CD8-positive, alpha-beta T cell (primary cell): ENCODE measurements at regions of chr2 and their contacts with region 1.

Region 1: DNA sequence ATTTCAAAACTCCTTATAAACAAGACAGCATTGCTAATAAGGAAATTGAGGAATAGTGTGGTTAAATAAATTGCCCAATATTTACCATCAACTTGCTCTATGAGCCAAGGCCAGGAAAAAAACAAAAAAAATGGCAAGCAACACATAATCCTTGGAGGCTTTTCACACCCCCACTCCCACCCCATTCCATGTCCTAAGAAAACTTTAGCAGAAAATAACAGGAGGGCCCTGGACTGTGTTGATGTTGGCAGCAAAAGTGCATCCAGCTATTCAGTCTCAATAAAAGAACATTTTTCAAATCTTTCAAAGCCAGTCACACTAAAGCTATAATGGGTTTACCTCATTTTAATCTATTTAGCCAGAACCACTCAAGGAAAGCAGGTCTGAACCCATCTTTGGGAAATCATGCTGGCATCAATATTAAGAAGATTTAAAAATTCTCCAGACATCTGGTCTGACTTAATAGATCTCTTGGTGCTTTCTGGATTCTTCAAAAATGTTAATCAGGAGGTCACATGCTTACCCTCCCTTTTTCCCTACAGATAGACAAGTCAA is 34.6 kb upstream of the STK17B start:
- DNase-seq: no peak
- ATAC-seq: no peak
- H3K4me3 ChIP-seq: no peak overlapping the region
- H3K4me3 Mint-ChIP-seq: no peak overlapping the region
- H3K27ac ChIP-seq: no peak overlapping the region
- H3K27ac Mint-ChIP-seq: no peak overlapping the region
- H3K4me1 ChIP-seq: peaks cover 31% of the 10 kb centered on the region
- H3K4me1 Mint-ChIP-seq: peaks cover 61% of the 10 kb centered on the region
- H3K27me3 ChIP-seq: no peaks in the 10 kb centered on the region
- H3K27me3 Mint-ChIP-seq: no peaks in the 10 kb centered on the region
- CTCF ChIP-seq: no peak

Region 2: GRCh38 chr2:196160101-196160500 is 45.9 kb before region 1 on chr2:
- CTCF ChIA-PET with region 1: interaction called, 3 read pairs
- POLR2A ChIA-PET with region 1: interaction called, 4 read pairs
- intact Hi-C with region 1: loop called in 1 of 2 experiments (anchors 1 kb)
- DNase-seq: peak in 7 of 9 experiments; percentile 49 to 94 (median 69)
- ATAC-seq: peak; percentile 46
- H3K4me3 ChIP-seq: peak overlapping the region; percentile 22 to 45
- H3K4me3 Mint-ChIP-seq: peak overlapping the region; percentile 58
- H3K27ac ChIP-seq: peak overlapping the region; percentile 75 to 91
- H3K27ac Mint-ChIP-seq: peak overlapping the region; percentile 73
- H3K4me1 ChIP-seq: peaks cover 86% of the 10 kb centered on the region
- H3K4me1 Mint-ChIP-seq: peaks cover 82% of the 10 kb centered on the region
- H3K27me3 ChIP-seq: no peaks in the 10 kb centered on the region
- H3K27me3 Mint-ChIP-seq: no peaks in the 10 kb centered on the region
- CTCF ChIP-seq: no peak

Region 3: DNA sequence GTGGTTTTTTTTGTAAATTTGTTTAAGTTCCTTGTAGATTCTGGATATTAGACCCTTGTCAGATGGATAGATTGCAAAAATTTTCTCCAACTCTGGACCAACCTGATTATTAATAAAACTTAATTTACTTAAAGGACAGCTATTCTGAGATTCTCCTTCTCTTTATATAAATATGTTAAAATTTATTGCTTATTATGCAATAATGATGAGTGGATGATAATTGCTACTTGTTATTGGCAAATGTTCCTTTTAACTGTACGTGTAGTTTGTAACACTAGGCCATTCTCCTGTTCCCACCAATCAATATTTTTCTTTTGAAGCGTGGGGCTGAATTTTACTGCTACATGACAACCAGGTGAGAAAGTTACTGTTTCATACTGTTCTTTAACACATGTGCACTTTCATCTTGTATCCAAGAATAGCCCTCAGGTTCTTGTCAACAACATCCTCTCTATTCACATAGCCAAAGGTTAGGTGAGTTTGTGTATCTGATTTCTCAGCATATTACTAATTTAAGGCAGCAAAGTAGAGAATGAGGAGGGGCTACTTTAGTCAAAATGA is 18.0 kb before region 1 on chr2:
- CTCF ChIA-PET with region 1: interaction called, 5 read pairs
- POLR2A ChIA-PET with region 1: interaction called, 27 read pairs
- intact Hi-C with region 1: loop called in 1 of 2 experiments (anchors 2 kb)
- DNase-seq: no peak
- ATAC-seq: no peak
- H3K4me3 ChIP-seq: no peak overlapping the region
- H3K4me3 Mint-ChIP-seq: no peak overlapping the region
- H3K27ac ChIP-seq: no peak overlapping the region
- H3K27ac Mint-ChIP-seq: peak overlapping the region; percentile 64
- H3K4me1 ChIP-seq: peaks cover 62% of the 10 kb centered on the region
- H3K4me1 Mint-ChIP-seq: peaks cover 82% of the 10 kb centered on the region
- H3K27me3 ChIP-seq: no peaks in the 10 kb centered on the region
- H3K27me3 Mint-ChIP-seq: no peaks in the 10 kb centered on the region
- CTCF ChIP-seq: no peak

Region 4: DNA sequence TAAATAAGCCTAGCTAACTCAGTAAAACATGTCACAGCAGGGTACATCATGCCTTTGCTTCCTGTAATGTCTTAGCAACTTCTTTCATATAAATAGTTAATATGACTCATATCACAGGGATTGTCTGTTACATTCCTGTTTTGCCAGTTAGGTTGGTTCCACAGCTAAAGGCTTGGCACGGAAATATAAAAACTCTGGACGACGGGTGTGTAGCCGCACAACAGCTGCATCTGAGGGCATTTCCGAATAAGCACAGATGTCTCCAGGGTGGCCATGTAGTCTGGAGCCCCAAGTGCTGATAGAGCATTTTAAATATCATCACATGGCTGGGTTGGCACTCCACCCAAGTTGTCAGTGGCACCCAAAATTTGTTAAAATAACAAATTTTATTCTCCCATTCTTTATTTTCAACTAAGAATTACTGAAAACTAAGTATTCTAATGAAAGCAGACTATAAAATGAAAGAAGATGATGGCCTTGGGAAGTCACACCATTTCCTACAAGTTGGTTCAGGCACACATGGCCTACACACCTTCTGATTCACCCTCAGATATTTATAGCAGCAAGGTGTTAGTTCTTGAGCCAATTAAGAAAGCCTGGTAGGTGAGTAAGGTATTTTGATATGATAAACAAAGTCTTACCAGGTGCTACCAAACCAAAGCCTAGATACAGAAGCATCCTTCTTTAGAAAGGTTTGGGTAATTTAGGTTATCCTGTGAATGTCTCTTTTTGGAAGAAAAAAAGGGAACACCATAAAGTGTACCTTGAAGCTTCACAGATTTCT is 27.3 kb after region 1 on chr2:
- CTCF ChIA-PET with region 1: interaction called, 5 read pairs
- POLR2A ChIA-PET with region 1: interaction called, 3 read pairs
- intact Hi-C with region 1: loop called in 1 of 2 experiments (anchors 1 kb)
- DNase-seq: peak in 2 of 9 experiments; percentile 16 to 39
- ATAC-seq: no peak
- H3K4me3 ChIP-seq: no peak overlapping the region
- H3K4me3 Mint-ChIP-seq: no peak overlapping the region
- H3K27ac ChIP-seq: peak overlapping the region; percentile 31 to 66
- H3K27ac Mint-ChIP-seq: peak overlapping the region; percentile 91
- H3K4me1 ChIP-seq: peaks cover 85% of the 10 kb centered on the region
- H3K4me1 Mint-ChIP-seq: peaks cover 86% of the 10 kb centered on the region
- H3K27me3 ChIP-seq: no peaks in the 10 kb centered on the region
- H3K27me3 Mint-ChIP-seq: no peaks in the 10 kb centered on the region
- CTCF ChIP-seq: no peak

Region 5: GRCh38 chr2:196263181-196263747 is 57.3 kb after region 1 on chr2:
- CTCF ChIA-PET with region 1: interaction called, 6 read pairs
- POLR2A ChIA-PET with region 1: no interaction called
- intact Hi-C with region 1: loop called in 1 of 2 experiments (anchors 2 kb)
- DNase-seq: peak in 6 of 9 experiments; percentile 39 to 87 (median 58)
- ATAC-seq: peak; percentile 82
- H3K4me3 ChIP-seq: peak overlapping the region; percentile 3 to 12
- H3K4me3 Mint-ChIP-seq: peak overlapping the region; percentile 72
- H3K27ac ChIP-seq: peak overlapping the region; percentile 27 to 61
- H3K27ac Mint-ChIP-seq: peak overlapping the region; percentile 93
- H3K4me1 ChIP-seq: peaks cover 72% of the 10 kb centered on the region
- H3K4me1 Mint-ChIP-seq: peaks cover 78% of the 10 kb centered on the region
- H3K27me3 ChIP-seq: no peaks in the 10 kb centered on the region
- H3K27me3 Mint-ChIP-seq: no peaks in the 10 kb centered on the region
- CTCF ChIP-seq: no peak